ENCODE measurements at regions of chr1 and their contacts with region 1.

Region 1: GRCh38 chr1:207077470-207078377 is 10.9 kb upstream of the C4BPB start:
- DNase-seq: peak; percentile 75
- H3K4me3 ChIP-seq: no peak overlapping the region
- H3K27ac ChIP-seq: no peak overlapping the region
- H3K4me1 ChIP-seq: peaks cover 44% of the 10 kb centered on the region
- H3K27me3 ChIP-seq: no peaks in the 10 kb centered on the region
- CTCF ChIP-seq: peak; percentile 91 to 94

Region 2: DNA sequence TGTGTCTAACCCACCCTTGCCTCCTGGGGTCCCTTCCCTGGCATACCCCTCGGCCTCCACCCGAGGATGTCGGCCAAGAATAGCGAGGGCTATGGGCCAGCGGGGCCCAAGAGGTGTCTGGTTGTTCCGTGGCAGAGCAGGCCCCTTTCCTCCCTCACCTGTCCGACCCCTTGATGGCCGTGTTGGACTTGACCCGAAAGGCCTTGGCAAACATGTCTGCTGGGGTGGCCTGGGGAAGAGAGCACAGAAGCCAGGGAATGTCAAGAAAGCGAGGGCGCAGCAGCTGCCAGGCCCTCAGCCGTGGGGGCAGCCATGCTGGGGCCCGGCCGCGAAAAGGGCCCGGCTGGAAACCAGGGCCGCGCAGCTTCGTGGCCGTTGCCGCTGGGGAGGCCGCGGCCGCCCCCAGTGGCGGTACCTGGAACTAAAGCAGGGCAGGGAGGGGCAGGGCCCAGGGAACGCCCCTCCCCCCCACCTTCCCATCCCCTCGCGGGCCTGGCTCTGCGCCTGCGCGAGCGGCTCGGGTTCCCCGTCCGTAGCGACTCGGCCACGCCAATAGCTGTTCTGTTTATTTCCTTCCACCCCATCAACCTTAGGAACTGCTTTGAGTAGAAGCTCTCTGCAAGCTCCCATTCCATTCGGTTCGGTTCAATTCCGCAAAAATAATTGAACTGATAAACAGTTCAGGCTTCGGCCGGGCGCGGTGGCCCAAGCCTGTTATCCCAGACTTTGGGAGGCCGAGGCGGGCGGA is 465.4 kb before region 1 on chr1 and contains the start of gene EIF2D:
- CTCF ChIA-PET with region 1: no interaction called
- dilution Hi-C with region 1: no loop called
- in situ Hi-C with region 1: no loop called
- intact Hi-C with region 1: loop called (anchors 10 kb)
- DNase-seq: peak; percentile 87
- H3K4me3 ChIP-seq: peak within 1 kb of the TSS; percentile 74 to 93 (median 87)
- H3K27ac ChIP-seq: peak within 1 kb of the TSS; percentile 86
- H3K4me1 ChIP-seq: peaks cover 9% of the 10 kb centered on the region
- H3K27me3 ChIP-seq: no peaks in the 10 kb centered on the region
- CTCF ChIP-seq: peak; percentile 74 to 98
- total RNA-seq, gene EIF2D: 43.0 to 44.0 TPM

Region 3: DNA sequence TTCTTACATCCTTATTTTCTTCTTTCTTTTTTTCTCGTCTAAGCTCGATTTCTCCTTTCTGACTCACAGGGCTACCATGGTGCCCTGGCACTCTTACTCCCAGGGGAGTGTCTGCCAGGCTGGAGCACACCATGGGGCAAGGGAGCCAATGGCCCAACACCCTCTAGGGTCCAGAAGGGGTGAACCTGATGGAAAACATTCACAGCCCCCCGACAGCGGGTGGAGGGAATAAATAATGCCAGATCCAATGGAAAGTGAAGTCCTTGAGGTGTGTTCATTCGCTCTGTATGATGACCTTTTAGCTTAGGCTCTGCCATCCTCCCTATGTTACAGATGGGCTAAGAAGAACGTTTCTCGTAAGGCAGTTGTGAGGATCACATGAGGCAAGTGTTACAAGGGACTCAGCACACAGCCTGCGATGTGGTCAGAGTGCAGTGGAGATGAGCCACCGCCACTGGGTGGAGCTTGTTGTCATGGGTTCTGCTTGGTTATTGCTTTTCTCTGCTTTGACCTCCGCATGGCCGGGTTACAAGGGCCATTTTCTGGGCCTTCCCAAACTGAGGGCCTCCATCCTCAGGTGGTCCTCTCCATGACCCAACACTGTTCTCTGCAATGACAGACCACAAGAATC is 152.5 kb before region 1 on chr1:
- CTCF ChIA-PET with region 1: no interaction called
- dilution Hi-C with region 1: no loop called
- in situ Hi-C with region 1: no loop called
- intact Hi-C with region 1: loop called (anchors 5 kb)
- DNase-seq: no peak
- H3K4me3 ChIP-seq: no peak overlapping the region
- H3K27ac ChIP-seq: no peak overlapping the region
- H3K4me1 ChIP-seq: peaks cover 5% of the 10 kb centered on the region
- H3K27me3 ChIP-seq: no peaks in the 10 kb centered on the region
- CTCF ChIP-seq: no peak

Region 4: GRCh38 chr1:207032528-207033017 is 45.2 kb before region 1 on chr1 and contains the start of gene C1orf116:
- CTCF ChIA-PET with region 1: no interaction called
- dilution Hi-C with region 1: no loop called
- in situ Hi-C with region 1: no loop called
- intact Hi-C with region 1: loop called (anchors 1 kb)
- DNase-seq: peak; percentile 99
- H3K4me3 ChIP-seq: peak within 1 kb of the TSS; percentile 46 to 78 (median 72)
- H3K27ac ChIP-seq: peak within 1 kb of the TSS; percentile 100
- H3K4me1 ChIP-seq: peaks cover 57% of the 10 kb centered on the region
- H3K27me3 ChIP-seq: no peaks in the 10 kb centered on the region
- CTCF ChIP-seq: no peak
- total RNA-seq, gene C1orf116: 94.0 to 129 TPM

Region 5: GRCh38 chr1:207240325-207241095 is 162.8 kb after region 1 on chr1:
- CTCF ChIA-PET with region 1: no interaction called
- dilution Hi-C with region 1: no loop called
- in situ Hi-C with region 1: no loop called
- intact Hi-C with region 1: no loop called
- DNase-seq: peak; percentile 98
- H3K4me3 ChIP-seq: peak overlapping the region in 1 of 3 experiments; percentile 0
- H3K27ac ChIP-seq: peak overlapping the region; percentile 87
- H3K4me1 ChIP-seq: peaks cover 23% of the 10 kb centered on the region
- H3K27me3 ChIP-seq: no peaks in the 10 kb centered on the region
- CTCF ChIP-seq: no peak

Region 6: DNA sequence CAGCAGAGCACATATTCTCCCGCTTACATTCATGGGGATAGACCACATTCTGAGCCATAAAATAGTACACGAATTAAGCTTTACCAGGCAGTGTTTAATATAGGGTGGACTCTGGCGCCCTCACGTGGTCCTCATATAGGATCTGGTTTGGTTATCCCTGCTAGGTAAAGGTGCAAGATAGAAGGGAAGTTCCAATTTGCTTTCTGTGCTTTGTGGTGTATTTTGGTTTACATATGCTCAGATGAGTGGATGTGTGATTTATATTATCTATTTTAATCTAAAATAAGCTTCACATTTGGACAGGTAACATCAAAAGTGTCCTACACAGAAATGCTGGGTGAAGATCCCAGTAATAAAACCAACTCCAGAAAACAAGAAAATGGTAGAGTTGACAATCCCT is 421.8 kb after region 1 on chr1:
- CTCF ChIA-PET with region 1: no interaction called
- dilution Hi-C with region 1: no loop called
- in situ Hi-C with region 1: loop called in 1 of 2 experiments (anchors 25 kb)
- intact Hi-C with region 1: no loop called
- DNase-seq: peak; percentile 47
- H3K4me3 ChIP-seq: no peak overlapping the region
- H3K27ac ChIP-seq: no peak overlapping the region
- H3K4me1 ChIP-seq: peaks cover 7% of the 10 kb centered on the region
- H3K27me3 ChIP-seq: peaks cover 13% of the 10 kb centered on the region
- CTCF ChIP-seq: peak; percentile 70 to 81